GM13977 (cell line): ENCODE measurements at regions of chr4 and their contacts with region 1.

Region 1: DNA sequence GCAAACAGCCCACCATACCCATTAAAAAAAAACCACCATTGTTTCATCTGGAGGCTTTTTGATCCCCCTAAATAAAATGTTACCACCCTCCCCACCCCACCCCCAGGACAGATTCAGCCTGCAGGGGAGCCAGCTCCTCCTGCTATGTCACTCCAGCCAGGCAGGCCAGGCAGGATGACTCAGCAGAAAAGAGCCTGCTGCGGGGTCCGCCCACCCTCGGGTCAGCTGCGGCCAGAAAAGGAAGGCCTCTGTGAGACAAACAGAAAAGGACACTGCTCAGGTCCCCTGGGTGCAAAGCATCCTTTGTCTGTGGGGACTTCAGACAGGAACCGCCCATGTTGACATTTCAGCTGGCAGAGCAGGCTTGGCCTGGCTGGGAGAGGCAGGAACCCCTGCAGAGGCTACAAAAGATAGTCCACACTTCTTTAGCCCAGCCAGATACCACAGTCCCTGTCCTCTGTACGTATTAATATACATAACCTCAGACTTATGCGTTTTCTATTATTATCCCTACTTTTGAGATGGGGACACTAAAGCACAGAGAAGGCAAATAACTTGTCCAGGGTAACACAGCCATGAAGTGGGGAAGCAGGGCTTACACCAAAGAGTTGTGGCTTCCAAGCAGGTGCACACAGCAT is 147.7 kb downstream of the CPEB2 start:
- DNase-seq: peak; percentile 26
- CTCF ChIP-seq: no peak

Region 2: GRCh38 chr4:13654158-13654797 is 1495.7 kb before region 1 on chr4:
- in situ Hi-C with region 1: loop called (anchors 25 kb)
- DNase-seq: peak; percentile 72
- CTCF ChIP-seq: peak; percentile 95